ENCODE measurements at regions of chr21 and their contacts with region 1.

Region 1: GRCh38 chr21:34888569-34889319 is 160.4 kb downstream of the RUNX1 start:
- DNase-seq: peak in 9 of 10 donors; percentile 51 to 94 (median 59)

Region 2: DNA sequence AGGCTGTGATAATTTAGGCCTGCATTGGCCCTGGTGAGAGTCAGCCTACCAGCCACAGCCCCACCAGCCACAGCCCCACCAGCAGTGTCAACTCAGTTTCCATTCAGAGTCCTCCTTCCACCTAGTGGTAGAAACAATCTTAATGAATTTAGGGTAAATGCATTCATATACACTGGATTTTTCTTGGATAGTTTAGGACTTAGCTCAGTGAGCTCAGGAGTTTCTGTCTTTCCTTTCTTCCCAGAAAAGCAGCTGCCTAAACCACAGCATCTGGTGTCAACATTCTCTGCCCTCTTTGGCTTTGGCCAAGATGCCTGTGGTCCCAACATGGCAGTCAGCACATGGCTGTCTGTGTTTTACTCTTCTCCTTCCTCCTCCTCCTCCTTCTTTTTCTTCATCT is 126.0 kb before region 1 on chr21:
- intact Hi-C with region 1: no loop called
- DNase-seq: no peak

Region 3: GRCh38 chr21:35400233-35400957 is 511.7 kb after region 1 on chr21:
- intact Hi-C with region 1: loop called (anchors 5 kb)
- DNase-seq: no peak

Region 4: GRCh38 chr21:35840197-35840799 is 951.6 kb after region 1 on chr21:
- intact Hi-C with region 1: loop called (anchors 10 kb)
- DNase-seq: peak in 5 of 10 donors; percentile 22 to 45 (median 41)

Region 5: DNA sequence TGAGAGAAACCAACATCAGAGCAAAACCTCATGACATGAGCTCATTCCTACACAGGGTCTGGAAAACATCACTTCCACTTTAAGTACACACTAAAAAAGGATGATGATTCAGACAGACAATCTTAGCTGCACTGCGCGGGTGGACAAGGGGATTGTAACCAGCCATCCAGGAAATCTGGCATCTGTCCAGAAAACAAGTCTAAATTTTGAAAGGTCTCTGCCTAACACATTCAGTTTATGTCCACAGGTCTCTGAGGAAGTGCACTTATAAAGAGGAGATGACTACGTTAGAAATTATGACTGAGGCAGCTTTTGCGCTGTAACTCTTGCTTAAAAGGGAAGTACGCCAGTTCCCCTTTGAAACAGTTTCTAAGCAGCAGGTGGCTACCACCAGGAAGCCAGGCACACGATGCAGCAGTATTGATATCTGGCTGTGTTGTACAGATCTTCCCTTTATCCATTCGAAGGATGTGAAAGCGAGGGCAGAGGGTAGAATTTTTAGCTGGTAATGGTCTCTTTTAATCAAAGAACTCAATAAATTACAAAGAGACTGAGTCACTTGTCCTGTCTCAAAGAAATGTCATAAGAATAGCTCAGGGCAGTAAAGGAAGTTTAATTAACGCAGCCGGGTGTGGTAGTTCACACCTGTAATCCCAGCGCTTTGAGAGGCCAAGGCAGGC is 1043.6 kb after region 1 on chr21:
- intact Hi-C with region 1: loop called (anchors 10 kb)
- DNase-seq: peak in 1 of 10 donors; percentile 23

Measured in posterior cingulate gyrus (tissue), 11 donors.